SK-N-SH (cell line): ENCODE measurements at regions of chr7 and their contacts with region 1.

Region 1: DNA sequence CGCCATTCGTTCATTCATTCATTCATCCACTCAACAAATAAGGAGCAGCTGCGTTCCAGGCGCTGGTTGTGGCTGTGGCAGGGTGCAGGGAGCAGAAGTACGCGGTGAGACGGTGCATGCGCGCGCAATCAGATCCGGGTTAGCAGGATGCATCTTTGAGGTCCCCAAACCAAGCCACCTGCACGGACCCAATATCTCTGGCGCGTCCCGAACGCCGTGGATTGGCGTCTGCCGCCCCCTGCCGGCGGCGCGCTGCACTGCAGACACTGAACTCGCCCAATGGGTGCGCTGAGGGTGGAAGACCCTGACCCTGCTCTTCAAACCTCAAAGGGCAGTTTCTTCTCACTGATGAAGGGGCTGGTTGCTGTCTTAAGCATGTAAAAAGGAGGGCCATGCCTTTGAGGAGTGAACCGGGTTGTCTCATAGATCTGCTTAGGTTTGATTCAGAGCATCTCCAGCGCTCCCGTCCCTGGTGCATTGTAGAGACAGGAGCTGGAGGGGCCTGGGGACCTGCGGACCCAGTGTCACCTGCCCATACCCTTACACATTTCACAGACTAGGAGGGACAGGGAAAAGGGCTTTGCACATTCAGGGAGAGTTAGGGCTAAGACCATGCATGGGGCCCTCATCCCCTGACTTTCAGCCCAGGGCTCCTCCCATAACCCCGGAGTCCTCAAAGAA is 102.5 kb downstream of the RAMP3 start:
- DNase-seq: peak; percentile 86
- H3K4me3 ChIP-seq: peak overlapping the region in 1 of 2 experiments; percentile 20; a peak in 1 of 4 replicates
- H3K27ac ChIP-seq: no peak overlapping the region
- H3K4me1 ChIP-seq: peaks cover 0 to 11% of the 10 kb centered on the region in 2 experiments; a peak in 1 of 4 replicates
- H3K27me3 ChIP-seq: peaks cover 13% of the 10 kb centered on the region; the same call in 1 of the 2 replicates
- CTCF ChIP-seq: peak; percentile 100
- EP300 ChIP-seq: no peak
- RAD21 ChIP-seq: peak; percentile 88

Region 2: DNA sequence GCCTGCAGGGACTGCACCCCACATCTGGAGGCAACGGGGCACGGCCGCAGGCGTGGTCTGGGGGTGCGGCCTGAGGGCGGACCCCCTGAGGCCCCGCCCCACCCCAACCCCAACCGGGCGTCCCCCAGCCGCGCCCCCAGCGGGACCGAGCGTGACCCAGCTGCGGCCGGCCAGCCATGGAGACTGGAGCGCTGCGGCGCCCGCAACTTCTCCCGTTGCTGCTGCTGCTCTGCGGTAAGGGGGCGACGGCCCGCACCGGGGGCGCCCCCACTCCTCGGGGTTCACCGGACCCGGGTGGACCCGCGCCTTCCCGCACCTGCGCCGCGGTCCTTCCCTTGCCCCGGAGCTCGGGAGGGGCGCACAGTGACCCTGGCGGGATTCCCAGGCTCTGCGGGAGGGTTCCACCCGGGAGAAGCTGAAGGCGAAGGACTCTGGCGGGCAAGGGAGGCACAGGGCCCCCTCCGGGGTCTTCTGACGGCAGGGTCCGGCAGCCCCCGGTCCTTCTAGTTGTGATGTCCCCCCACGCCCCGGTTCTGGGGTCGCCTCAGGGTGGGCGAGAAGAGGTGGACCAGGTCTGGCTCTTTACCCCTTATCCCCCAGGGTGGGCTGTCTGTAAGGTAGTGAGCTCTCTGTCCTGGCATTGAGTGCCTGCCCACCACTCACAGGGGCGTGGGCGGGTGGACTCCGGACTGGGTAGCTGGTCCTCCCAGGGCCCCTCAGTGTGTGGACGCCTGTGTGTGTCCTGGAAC is 102.3 kb before region 1 on chr7 and contains the start of gene RAMP3:
- CTCF ChIA-PET with region 1: interaction called, 201 read pairs
- POLR2A ChIA-PET with region 1: no interaction called
- DNase-seq: peak; percentile 88
- H3K4me3 ChIP-seq: peak within 1 kb of the TSS in 1 of 2 experiments; percentile 35; a peak in 1 of 4 replicates
- H3K27ac ChIP-seq: no peak within 1 kb of the TSS
- H3K4me1 ChIP-seq: peaks cover 0 to 14% of the 10 kb centered on the region in 2 experiments; a peak in 1 of 4 replicates
- H3K27me3 ChIP-seq: peaks cover 29% of the 10 kb centered on the region
- CTCF ChIP-seq: no peak
- EP300 ChIP-seq: no peak
- RAD21 ChIP-seq: no peak
- polyA plus RNA-seq, gene RAMP3: not detected in 2 replicates

Region 3: GRCh38 chr7:45178241-45179225 is 81.6 kb before region 1 on chr7:
- CTCF ChIA-PET with region 1: interaction called, 15 read pairs
- POLR2A ChIA-PET with region 1: no interaction called
- DNase-seq: peak; percentile 65
- H3K4me3 ChIP-seq: no peak overlapping the region
- H3K27ac ChIP-seq: no peak overlapping the region
- H3K4me1 ChIP-seq: no peaks in the 10 kb centered on the region
- H3K27me3 ChIP-seq: peaks cover 45% of the 10 kb centered on the region; the same call in 1 of the 2 replicates
- CTCF ChIP-seq: peak; percentile 28; the same call in 1 of the 2 replicates
- EP300 ChIP-seq: no peak
- RAD21 ChIP-seq: peak; percentile 57

Region 4: DNA sequence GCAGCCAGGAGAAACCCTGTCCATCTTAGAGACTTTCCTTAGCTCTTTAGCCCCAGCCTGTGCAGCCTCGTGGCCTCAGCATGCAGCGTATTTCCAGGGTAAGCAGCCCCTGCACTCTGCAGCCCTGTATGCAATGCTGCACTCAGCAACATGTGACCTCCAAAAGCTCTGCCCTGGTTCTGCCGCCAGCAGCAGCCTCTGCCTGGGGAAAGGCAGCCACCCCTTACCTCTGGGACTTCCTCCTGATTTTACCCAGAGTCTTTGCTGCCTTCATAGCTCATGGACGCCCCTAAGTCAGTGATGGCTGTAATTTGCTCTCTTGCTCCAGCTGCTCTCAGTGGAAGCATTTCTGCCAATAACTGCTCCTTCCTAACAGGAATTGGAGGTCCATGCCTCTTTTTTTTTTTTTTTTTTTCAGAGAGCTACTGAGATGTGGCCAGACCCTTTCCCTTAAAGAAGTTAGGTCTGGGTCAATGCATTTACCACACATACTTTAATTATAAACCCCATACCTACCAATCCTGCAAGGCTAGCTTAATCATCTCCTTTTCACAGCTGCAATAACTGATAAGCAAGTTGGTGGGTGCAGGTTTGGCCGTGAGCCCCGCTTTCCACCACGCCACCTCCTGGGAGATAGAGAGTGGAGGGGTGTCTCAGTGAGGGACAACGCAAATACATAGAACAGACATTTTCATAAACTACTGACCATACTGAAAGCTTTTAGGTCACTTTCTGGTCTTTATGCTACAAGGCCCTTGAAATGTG is 30.8 kb before region 1 on chr7:
- CTCF ChIA-PET with region 1: interaction called, 23 read pairs
- POLR2A ChIA-PET with region 1: no interaction called
- DNase-seq: peak; percentile 53
- H3K4me3 ChIP-seq: no peak overlapping the region
- H3K27ac ChIP-seq: no peak overlapping the region
- H3K4me1 ChIP-seq: peaks cover 0 to 22% of the 10 kb centered on the region in 2 experiments; a peak in 2 of 4 replicates
- H3K27me3 ChIP-seq: peaks cover 42% of the 10 kb centered on the region
- CTCF ChIP-seq: no peak
- EP300 ChIP-seq: no peak
- RAD21 ChIP-seq: no peak

Region 5: DNA sequence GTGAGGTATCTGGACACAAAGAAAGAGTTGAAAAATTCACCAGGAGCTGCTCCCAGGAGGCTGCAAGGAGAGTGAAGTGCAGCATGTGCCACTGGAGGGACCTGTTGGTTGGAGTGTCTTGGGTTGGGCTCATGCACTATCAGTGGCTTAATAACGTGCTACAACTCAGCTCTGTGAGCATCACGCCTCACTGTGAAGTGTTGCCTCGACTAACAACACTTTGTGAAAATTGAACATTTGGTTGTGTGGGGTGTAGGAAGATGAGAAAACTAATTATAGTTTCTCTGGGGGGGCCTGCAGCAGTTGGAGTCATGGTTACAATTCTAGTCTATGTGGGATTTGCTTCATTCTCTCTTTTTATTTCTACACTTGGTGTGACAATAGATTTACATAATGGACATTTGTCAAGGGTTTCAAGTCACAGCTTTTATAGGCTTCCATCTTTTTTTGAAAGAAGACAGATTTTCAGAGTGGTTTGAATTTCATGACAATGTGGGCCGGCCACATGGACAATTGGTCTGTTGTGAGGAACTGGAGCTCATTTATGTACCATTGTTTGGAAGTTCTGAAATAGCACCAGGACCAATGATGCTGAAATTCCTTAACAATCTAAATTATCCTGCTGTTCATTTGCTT is 18.8 kb after region 1 on chr7:
- CTCF ChIA-PET with region 1: interaction called, 12 read pairs
- POLR2A ChIA-PET with region 1: no interaction called
- DNase-seq: no peak
- H3K4me3 ChIP-seq: no peak overlapping the region
- H3K27ac ChIP-seq: no peak overlapping the region
- H3K4me1 ChIP-seq: no peaks in the 10 kb centered on the region
- H3K27me3 ChIP-seq: no peaks in the 10 kb centered on the region
- CTCF ChIP-seq: no peak
- EP300 ChIP-seq: no peak
- RAD21 ChIP-seq: no peak

Region 6: GRCh38 chr7:45574521-45575500 is 314.7 kb after region 1 on chr7:
- CTCF ChIA-PET with region 1: interaction called, 10 read pairs
- POLR2A ChIA-PET with region 1: no interaction called
- DNase-seq: peak; percentile 92
- H3K4me3 ChIP-seq: peak overlapping the region; percentile 37 to 58
- H3K27ac ChIP-seq: peak overlapping the region in 1 of 2 experiments; percentile 84; a peak in 2 of 4 replicates
- H3K4me1 ChIP-seq: peaks cover 0 to 58% of the 10 kb centered on the region in 2 experiments; a peak in 2 of 4 replicates
- H3K27me3 ChIP-seq: peaks cover 43% of the 10 kb centered on the region
- CTCF ChIP-seq: no peak
- EP300 ChIP-seq: no peak
- RAD21 ChIP-seq: peak; percentile 23; the same call in 1 of the 2 replicates